ENCODE measurements at regions of chr1 and their contacts with region 1.

Region 1: GRCh38 chr1:21200767-21201166 is 24.1 kb upstream of the EIF4G3 start:
- DNase-seq: no peak
- H3K4me3 Mint-ChIP-seq: no peak overlapping the region
- H3K27ac Mint-ChIP-seq: no peak overlapping the region
- H3K4me1 Mint-ChIP-seq: no peaks in the 10 kb centered on the region
- H3K27me3 Mint-ChIP-seq: peaks cover 4% of the 10 kb centered on the region

Region 2: GRCh38 chr1:20696397-20697329 is 504.1 kb before region 1 on chr1:
- intact Hi-C with region 1: loop called (anchors 1 kb)
- DNase-seq: peak; percentile 51
- H3K4me3 Mint-ChIP-seq: peak overlapping the region; percentile 84
- H3K27ac Mint-ChIP-seq: no peak overlapping the region
- H3K4me1 Mint-ChIP-seq: peaks cover 12% of the 10 kb centered on the region
- H3K27me3 Mint-ChIP-seq: peaks cover 6% of the 10 kb centered on the region

Region 3: DNA sequence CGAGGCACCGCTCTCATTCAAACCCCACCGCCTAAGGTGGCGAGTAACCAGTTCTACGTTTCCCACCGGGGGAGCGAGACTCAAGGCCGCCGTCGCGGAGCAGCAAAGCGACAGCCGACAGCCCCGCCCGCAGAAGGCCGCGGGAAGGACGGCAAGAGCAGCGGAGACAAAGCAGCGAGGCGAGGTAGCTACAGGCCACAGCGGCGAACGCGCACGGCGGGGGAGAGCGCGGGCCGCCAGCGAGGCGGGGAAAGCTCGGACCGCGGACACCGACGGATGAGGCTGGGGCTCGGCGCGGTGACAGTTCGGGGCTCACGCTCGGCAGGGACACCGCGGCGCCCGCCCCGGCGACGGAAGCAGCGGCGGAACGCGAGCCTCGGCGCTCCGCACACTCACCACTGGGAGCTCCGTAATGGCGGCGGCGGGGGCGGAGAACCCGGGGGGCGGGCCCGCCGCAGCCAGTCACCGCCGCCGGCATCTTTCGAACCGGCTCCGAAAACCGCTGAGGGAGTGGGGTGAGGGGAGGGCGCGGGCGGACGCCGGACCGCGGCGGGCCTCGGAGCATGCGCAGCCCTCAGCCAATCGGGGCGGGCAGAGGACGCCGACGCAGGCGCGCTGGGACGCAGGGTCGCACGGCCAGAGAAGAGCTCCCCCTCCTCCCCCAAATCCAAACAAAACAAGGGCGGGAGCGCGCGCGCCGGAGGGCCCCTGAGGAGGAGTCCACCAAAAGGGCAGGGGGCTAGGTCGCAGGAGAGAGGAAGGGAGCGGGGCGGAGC is 414.3 kb before region 1 on chr1:
- intact Hi-C with region 1: loop called (anchors 1 kb)
- DNase-seq: peak; percentile 95
- H3K4me3 Mint-ChIP-seq: peak overlapping the region; percentile 91
- H3K27ac Mint-ChIP-seq: peak overlapping the region; percentile 97
- H3K4me1 Mint-ChIP-seq: peaks cover 26% of the 10 kb centered on the region
- H3K27me3 Mint-ChIP-seq: peaks cover 5% of the 10 kb centered on the region

Region 4: DNA sequence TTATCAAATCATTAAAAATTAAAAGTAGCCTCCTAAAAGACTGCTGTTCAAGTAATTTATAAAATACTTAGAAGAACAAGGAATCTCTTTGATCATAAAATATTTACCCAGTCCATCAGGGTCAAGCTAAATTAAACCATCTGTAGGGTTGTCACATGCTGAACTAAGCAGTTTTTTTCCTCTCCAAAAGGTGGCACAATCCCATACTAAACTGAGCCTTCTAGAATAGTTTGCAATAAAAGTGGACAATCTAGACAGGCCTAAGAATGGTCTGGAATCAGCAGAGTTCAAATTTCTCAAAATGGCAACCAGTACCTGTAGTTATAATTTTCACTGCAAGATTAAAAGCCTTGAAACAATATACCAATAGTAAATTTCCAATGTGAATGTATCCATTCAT is 218.9 kb before region 1 on chr1:
- intact Hi-C with region 1: loop called (anchors 2 kb)
- DNase-seq: no peak
- H3K4me3 Mint-ChIP-seq: no peak overlapping the region
- H3K27ac Mint-ChIP-seq: no peak overlapping the region
- H3K4me1 Mint-ChIP-seq: peaks cover 4% of the 10 kb centered on the region
- H3K27me3 Mint-ChIP-seq: no peaks in the 10 kb centered on the region

Region 5: GRCh38 chr1:21355956-21356355 is 155.2 kb after region 1 on chr1:
- intact Hi-C with region 1: no loop called
- DNase-seq: no peak
- H3K4me3 Mint-ChIP-seq: no peak overlapping the region
- H3K27ac Mint-ChIP-seq: no peak overlapping the region
- H3K4me1 Mint-ChIP-seq: peaks cover 10% of the 10 kb centered on the region
- H3K27me3 Mint-ChIP-seq: peaks cover 13% of the 10 kb centered on the region

Measured in activated T-helper 1 cell treated with anti-CD3 and anti-CD28 coated beads, Interleukin-12 subunit alpha, Interleukin-12 subunit beta, Interleukin-2, Interleukin-4 antibody, amounts not matched to agents 30 ng/mL and 10 ng/mL and 1 ng/mL, durations not matched to agents 14 hours and 24 hours and 36 hours (primary cell).